Activated CD8-positive, alpha-beta memory T cell treated with anti-CD3 and anti-CD28 coated beads, Interleukin-2, amount 10 ng/mL, durations not matched to agents 7 days and 5 days (primary cell): ENCODE measurements at regions of chr1 and their contacts with region 1.

Region 1: DNA sequence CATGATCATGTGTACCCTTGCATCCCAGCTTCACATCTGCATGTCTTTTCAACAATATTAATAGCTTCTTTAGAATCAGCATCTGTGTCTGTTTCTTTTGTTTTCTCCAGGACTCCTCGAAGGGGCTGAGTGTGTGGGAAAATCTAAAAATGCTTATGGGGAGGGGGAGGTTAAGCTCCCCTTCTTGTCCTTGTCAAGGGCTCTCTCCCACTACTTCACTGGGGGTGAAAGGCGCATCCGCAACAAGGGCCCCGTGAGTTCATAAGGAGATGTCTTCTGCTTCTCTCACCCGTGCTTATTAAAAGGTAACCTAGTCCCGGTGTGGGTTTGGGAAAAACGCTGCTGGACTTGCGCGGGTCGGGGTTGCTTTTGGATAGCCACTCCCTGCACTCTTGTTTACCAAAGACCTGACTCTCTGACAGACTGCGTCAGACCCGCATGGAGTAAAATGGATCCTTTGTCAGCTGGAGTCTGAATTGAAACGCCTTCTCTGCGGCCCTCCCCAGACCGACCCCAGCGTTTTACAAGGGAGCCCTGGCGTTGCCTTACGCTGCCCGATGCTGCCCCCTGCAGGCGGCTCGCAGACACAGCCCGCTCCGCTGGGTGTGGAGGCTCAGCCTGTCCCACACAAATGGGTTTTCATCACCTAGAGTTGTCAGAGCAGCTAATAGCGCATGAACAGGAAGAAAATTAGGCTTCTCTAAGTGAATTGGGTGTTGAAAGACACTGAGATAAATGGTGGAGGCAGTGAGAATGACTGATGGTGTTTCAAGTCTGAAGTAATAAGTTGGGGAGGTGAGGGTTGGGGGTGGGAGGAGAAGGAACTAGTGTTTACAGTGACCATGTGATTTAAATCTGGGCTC is 53.8 kb downstream of the IER5 start:
- DNase-seq: peak; percentile 94
- ATAC-seq: peak; percentile 88
- H3K4me3 Mint-ChIP-seq: peak overlapping the region; percentile 35
- H3K27ac Mint-ChIP-seq: peak overlapping the region; percentile 86
- H3K4me1 Mint-ChIP-seq: peaks cover 64% of the 10 kb centered on the region
- H3K27me3 Mint-ChIP-seq: peaks cover 9% of the 10 kb centered on the region

Region 2: GRCh38 chr1:180881806-180882509 is 260.4 kb before region 1 on chr1:
- CTCF ChIA-PET with region 1: interaction called, 45 read pairs
- DNase-seq: no peak
- ATAC-seq: peak; percentile 58
- H3K4me3 Mint-ChIP-seq: no peak overlapping the region
- H3K27ac Mint-ChIP-seq: no peak overlapping the region
- H3K4me1 Mint-ChIP-seq: peaks cover 2% of the 10 kb centered on the region
- H3K27me3 Mint-ChIP-seq: no peaks in the 10 kb centered on the region

Region 3: GRCh38 chr1:181044449-181044966 is 97.8 kb before region 1 on chr1:
- CTCF ChIA-PET with region 1: interaction called, 133 read pairs
- DNase-seq: peak; percentile 78
- ATAC-seq: peak; percentile 90
- H3K4me3 Mint-ChIP-seq: no peak overlapping the region
- H3K27ac Mint-ChIP-seq: peak overlapping the region; percentile 83
- H3K4me1 Mint-ChIP-seq: peaks cover 46% of the 10 kb centered on the region
- H3K27me3 Mint-ChIP-seq: no peaks in the 10 kb centered on the region

Region 4: DNA sequence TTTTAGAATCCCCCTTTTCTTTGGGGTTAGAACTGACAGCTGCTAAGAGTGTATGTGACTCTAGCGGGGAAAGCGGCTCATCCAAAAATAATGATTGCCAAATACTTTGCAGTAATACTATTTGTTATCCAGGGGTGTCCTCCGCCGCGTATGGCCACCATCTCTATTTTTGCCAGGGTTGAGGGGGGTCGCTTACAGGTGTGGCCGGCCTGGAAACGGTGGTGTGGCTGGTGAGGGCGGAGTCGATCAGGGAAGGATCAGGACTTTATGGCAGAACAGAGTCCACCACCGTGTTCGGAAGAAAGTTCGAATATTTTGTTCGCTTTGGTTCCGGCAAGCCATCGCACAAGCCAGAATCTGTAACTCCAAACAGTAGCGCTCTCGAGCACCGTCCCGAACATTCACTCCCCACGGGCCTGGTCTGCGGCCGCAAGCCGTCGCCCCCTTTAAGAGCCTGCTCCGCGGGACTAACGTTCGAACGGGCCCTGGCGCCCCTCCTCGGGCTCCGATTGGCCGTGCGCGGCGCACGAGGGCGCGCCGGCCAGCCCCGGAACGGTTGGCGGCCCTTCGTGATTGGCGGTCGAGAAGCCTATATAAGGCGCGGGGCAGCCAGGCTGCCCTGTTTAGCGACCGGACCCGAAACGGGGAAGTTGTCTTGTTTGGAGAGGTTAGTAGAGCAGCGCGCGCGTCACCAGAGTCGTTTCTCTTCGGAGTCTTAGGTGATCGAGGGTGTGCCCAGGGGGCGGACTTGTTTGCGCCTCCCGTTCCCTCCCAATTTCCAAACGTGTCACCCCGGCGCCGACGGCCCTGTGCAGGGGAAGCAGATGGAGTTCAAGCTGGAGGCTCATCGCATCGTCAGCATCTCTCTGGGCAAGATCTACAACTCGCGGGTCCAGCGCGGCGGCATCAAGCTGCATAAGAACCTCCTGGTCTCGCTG is 54.0 kb before region 1 on chr1 and contains the start of gene IER5:
- CTCF ChIA-PET with region 1: interaction called, 91 read pairs
- DNase-seq: peak; percentile 97
- ATAC-seq: peak; percentile 81
- H3K4me3 Mint-ChIP-seq: peak within 1 kb of the TSS; percentile 96
- H3K27ac Mint-ChIP-seq: peak within 1 kb of the TSS; percentile 97
- H3K4me1 Mint-ChIP-seq: peaks cover 47% of the 10 kb centered on the region
- H3K27me3 Mint-ChIP-seq: no peaks in the 10 kb centered on the region
- total RNA-seq, gene IER5: 50.4 to 67.0 TPM

Region 5: GRCh38 chr1:181152892-181153633 is 10.7 kb after region 1 on chr1:
- CTCF ChIA-PET with region 1: interaction called, 70 read pairs
- DNase-seq: no peak
- ATAC-seq: no peak
- H3K4me3 Mint-ChIP-seq: no peak overlapping the region
- H3K27ac Mint-ChIP-seq: no peak overlapping the region
- H3K4me1 Mint-ChIP-seq: peaks cover 54% of the 10 kb centered on the region
- H3K27me3 Mint-ChIP-seq: peaks cover 23% of the 10 kb centered on the region